MCF 10A (cell line): ENCODE measurements at regions of chr5 and their contacts with region 1.

Region 1: GRCh38 chr5:148740966-148741742 is 85.3 kb upstream of the ADRB2 start:
- DNase-seq: peak; percentile 77
- H3K4me3 Mint-ChIP-seq: no peak overlapping the region
- H3K27ac Mint-ChIP-seq: no peak overlapping the region
- H3K4me1 Mint-ChIP-seq: peaks cover 5% of the 10 kb centered on the region
- H3K27me3 Mint-ChIP-seq: no peaks in the 10 kb centered on the region
- CTCF ChIP-seq: peak; percentile 88

Region 2: DNA sequence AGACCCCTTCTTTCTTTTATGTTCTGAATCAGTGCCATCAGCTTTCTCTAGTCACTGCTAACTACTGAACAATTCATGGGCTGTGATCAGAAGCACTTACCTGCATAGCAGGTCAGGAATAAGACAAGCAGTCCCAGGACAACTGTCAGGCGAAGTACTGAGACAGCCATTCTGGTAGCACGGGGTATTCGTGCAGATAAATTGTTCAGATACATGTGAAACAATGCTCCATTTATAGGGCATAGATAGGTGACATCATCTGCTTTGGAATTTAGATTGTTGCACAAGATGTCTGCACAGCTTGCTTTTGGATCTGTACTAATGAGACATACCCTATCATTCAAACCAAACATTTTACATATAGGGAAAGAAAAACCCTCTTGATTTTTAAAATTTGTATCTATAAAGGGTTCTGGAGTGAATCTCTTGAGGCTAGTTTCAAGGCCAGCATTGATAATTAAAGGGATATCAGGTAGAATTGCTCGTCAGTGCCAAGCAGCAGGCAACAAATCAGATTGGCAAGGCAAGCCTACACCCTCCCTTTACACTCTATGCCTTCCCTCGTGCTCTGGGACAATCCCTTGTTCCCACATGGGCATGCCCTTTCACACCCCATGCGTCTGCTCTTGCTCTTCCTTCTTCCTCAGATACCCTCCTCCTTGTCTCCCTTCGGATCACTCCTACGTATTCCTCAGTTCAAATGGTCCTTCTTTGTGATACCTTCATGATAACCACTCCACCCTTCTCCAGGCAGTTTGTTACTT is 834.6 kb before region 1 on chr5 and contains the start of gene C5orf46:
- CTCF ChIA-PET with region 1: no interaction called
- POLR2A ChIA-PET with region 1: no interaction called
- intact Hi-C with region 1: no loop called
- DNase-seq: peak; percentile 75
- H3K4me3 Mint-ChIP-seq: peak within 1 kb of the TSS; percentile 69
- H3K27ac Mint-ChIP-seq: peak within 1 kb of the TSS; percentile 85
- H3K4me1 Mint-ChIP-seq: peaks cover 39% of the 10 kb centered on the region
- H3K27me3 Mint-ChIP-seq: no peaks in the 10 kb centered on the region
- CTCF ChIP-seq: no peak
- total RNA-seq, gene C5orf46: 2.1 and 5.7 TPM in 2 replicates

Region 3: DNA sequence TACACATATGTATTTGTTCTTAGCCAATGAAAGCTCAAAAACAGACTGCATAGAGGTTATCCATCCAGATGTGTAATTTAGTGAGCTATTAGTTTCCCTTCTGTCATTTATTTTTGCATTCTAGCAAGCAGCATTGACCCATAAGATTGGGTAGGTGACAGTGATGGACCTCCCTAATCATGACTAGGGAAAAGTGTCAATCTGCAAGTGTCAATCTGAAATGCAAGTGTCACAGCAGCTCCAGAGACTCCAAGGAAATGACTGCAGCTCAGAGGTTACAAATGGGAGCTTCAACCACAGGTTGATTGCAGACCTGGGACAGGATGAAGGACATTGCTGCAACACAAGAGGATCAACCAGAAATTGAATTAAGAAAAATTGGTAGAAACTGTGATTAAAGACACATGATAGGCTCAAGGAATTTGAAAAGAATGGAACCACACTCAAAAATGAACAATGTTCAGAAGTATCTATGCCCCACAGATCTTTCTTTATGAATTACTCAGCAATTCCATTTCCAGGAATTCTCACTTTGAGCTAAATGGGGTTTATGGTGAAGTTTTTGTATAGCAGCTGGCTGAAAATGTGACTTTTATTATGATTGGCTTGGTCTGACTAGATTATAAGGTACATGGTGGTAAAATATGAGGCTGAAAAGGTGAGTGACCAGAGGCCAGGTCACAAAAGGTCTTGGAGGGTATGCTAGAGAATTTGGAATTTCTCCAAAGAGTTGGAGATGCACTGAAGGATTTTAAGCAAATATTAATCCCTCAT is 27.2 kb before region 1 on chr5:
- CTCF ChIA-PET with region 1: no interaction called
- POLR2A ChIA-PET with region 1: no interaction called
- intact Hi-C with region 1: no loop called
- DNase-seq: no peak
- H3K4me3 Mint-ChIP-seq: no peak overlapping the region
- H3K27ac Mint-ChIP-seq: no peak overlapping the region
- H3K4me1 Mint-ChIP-seq: peaks cover 5% of the 10 kb centered on the region
- H3K27me3 Mint-ChIP-seq: peaks cover 3% of the 10 kb centered on the region
- CTCF ChIP-seq: no peak

Region 4: GRCh38 chr5:148776780-148777179 is 35.6 kb after region 1 on chr5:
- CTCF ChIA-PET with region 1: interaction called, 15 read pairs
- POLR2A ChIA-PET with region 1: interaction called, 3 read pairs
- intact Hi-C with region 1: no loop called
- DNase-seq: peak; percentile 95
- H3K4me3 Mint-ChIP-seq: no peak overlapping the region
- H3K27ac Mint-ChIP-seq: no peak overlapping the region
- H3K4me1 Mint-ChIP-seq: peaks cover 11% of the 10 kb centered on the region
- H3K27me3 Mint-ChIP-seq: no peaks in the 10 kb centered on the region
- CTCF ChIP-seq: no peak

Region 5: DNA sequence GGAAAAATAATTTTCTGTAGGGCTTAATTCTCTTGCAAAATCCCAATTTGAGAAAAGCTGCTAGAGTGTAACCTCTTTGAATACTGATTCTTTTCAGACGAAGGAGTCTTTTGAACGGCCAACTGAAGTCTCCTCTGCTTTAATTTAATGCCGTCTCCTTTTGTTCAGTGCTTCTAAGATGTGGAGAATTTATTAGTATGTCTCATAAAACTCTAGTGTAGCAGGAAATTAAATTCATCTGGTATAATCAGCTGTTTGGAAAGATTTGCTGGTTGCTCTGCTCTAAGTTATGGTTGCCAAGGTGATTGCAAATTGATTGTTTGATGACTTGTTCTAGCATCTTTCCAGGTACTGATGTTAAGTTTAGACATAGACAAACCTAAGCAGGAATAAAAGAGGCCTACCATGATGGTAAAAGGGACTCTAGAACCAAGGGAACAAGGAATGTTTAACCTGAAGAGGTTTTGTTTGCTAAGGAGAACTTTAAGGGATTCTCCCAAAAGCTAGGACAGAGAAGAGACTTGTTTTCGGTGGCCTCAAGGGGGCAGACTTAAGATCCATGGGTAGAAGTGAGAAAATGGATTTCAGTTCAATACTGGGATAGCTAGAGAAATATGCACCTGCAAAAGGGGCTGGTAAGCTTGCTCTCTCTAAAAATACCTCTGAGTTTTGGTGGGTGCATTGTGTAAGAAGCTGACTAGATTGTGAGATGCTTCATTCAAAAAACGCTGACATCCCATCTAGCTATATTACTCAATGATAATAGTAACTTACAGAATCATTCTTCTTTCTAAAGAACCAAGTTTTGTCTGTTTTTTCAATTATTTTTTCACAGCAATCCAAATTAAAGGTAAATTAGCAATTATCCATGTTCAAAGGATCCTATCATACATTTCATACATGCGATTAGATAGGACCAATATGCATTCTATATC is 79.6 kb after region 1 on chr5:
- CTCF ChIA-PET with region 1: interaction called, 42 read pairs
- POLR2A ChIA-PET with region 1: interaction called, 69 read pairs
- intact Hi-C with region 1: loop called (anchors 1 kb)
- DNase-seq: peak; percentile 63
- H3K4me3 Mint-ChIP-seq: no peak overlapping the region
- H3K27ac Mint-ChIP-seq: no peak overlapping the region
- H3K4me1 Mint-ChIP-seq: peaks cover 5% of the 10 kb centered on the region
- H3K27me3 Mint-ChIP-seq: no peaks in the 10 kb centered on the region
- CTCF ChIP-seq: peak; percentile 84

Region 6: GRCh38 chr5:148839960-148840359 is 98.8 kb after region 1 on chr5:
- CTCF ChIA-PET with region 1: interaction called, 10 read pairs
- POLR2A ChIA-PET with region 1: no interaction called
- intact Hi-C with region 1: no loop called
- DNase-seq: no peak
- H3K4me3 Mint-ChIP-seq: no peak overlapping the region
- H3K27ac Mint-ChIP-seq: peak overlapping the region; percentile 29
- H3K4me1 Mint-ChIP-seq: peaks cover 44% of the 10 kb centered on the region
- H3K27me3 Mint-ChIP-seq: no peaks in the 10 kb centered on the region
- CTCF ChIP-seq: no peak

Region 7: GRCh38 chr5:148957591-148958202 is 216.5 kb after region 1 on chr5:
- CTCF ChIA-PET with region 1: interaction called, 120 read pairs
- POLR2A ChIA-PET with region 1: interaction called, 6 read pairs
- intact Hi-C with region 1: loop called (anchors 1 kb)
- DNase-seq: peak; percentile 71
- H3K4me3 Mint-ChIP-seq: no peak overlapping the region
- H3K27ac Mint-ChIP-seq: no peak overlapping the region
- H3K4me1 Mint-ChIP-seq: peaks cover 24% of the 10 kb centered on the region
- H3K27me3 Mint-ChIP-seq: no peaks in the 10 kb centered on the region
- CTCF ChIP-seq: peak; percentile 99

Region 8: DNA sequence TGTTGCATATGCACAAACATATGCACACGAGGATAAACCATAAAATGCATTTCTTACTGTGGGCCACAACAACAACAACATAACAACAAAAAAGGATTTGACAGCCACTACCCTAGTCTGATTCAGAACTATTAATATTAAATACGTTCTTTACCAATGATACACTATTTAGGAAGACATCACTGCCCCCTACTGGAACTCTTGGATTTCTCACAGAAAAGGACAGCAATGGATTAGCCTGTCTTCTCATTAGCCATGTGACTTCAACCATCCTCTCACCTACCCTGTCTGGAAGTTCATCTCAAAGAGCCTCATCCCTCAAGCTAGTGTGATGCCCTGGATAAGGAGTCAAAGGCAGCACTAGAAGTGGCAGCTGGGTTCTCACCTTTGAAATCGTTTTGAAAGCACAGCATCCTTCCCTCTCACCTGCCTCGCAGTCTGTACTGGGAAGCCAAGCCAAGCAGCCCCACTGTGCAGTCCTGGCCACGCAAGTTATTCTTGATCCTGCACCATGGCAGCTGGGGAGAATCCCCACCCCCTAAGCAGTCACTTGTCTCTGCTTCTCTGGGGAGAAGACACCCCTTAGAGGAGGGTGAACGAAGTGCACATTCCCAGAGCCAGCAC is 257.1 kb after region 1 on chr5:
- CTCF ChIA-PET with region 1: interaction called, 903 read pairs
- POLR2A ChIA-PET with region 1: interaction called, 15 read pairs
- intact Hi-C with region 1: loop called (anchors 1 kb)
- DNase-seq: peak; percentile 93
- H3K4me3 Mint-ChIP-seq: no peak overlapping the region
- H3K27ac Mint-ChIP-seq: peak overlapping the region; percentile 73
- H3K4me1 Mint-ChIP-seq: peaks cover 60% of the 10 kb centered on the region
- H3K27me3 Mint-ChIP-seq: no peaks in the 10 kb centered on the region
- CTCF ChIP-seq: peak; percentile 79